Activated CD4-positive, alpha-beta memory T cell treated with anti-CD3 and anti-CD28 coated beads, Interleukin-2, amount 10 ng/mL, durations not matched to agents 7 days and 5 days (primary cell): ENCODE measurements at regions of chr1 and their contacts with region 1.

Region 1: DNA sequence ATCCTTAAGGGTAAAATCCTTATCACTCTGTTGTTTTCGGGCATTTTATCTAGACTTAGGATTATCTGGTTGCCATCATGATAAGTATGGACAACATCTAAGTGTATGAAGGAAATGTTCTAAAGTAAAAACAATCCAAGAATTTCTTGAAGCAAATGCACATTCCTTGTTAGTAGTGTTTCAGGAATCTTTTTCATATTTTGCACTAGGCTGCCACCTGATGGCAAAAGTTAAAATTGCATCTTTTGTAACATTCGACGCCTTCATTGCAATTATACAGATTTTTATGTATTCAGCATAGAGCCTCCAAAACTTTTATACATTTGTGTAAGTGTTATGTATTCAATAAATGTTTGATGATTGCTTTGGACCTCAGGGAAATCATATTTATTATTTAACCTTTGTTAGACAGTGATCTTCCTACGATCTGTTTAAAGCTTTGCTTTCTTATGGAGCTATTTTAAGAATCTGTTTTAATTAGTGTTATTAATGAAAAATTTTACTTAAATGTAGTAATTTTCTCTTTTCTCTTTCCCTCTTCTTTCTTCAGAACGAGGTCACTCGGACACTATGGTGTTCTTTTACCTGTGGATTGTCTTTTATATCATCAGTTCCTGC is 49.4 kb upstream of the KIAA1614 start:
- DNase-seq: no peak
- H3K4me3 Mint-ChIP-seq: no peak overlapping the region
- H3K27ac Mint-ChIP-seq: no peak overlapping the region
- H3K4me1 Mint-ChIP-seq: no peaks in the 10 kb centered on the region
- H3K27me3 Mint-ChIP-seq: no peaks in the 10 kb centered on the region

Region 2: DNA sequence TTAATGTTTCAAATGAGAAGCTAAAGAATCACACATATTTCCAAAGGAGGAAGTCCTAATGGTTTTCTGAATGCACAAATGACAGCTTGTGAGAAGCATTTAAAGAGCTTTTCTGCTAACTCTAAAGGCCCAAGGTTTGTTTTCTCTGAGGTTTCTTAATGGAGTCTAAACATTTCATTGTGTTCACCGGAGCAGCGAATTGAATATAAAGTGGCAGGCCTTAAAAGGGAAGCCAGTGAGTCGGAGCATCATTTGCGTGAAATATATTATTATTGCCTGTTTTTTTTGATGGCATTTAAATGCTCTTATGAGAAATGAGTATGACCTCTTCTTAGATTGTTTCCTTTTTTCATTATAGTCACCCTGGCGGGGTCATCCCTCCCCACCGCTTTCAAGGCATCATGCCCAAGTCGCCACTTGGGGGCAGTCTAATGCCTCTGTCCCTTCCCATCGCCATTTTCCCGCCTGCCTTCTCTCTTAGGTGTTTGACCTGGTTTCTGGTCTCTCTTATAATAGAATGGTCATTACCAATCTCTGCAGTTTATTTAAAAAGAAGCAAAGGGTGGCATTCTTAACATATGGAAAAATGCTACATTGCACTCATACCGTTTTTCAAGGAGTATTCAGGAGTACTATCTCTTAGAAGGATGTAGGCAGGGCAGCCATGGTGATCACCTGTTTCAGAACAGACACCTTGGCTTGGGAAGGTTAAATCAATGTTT is 329.8 kb before region 1 on chr1:
- CTCF ChIA-PET with region 1: interaction called, 113 read pairs
- POLR2A ChIA-PET with region 1: no interaction called
- DNase-seq: peak; percentile 72
- H3K4me3 Mint-ChIP-seq: no peak overlapping the region
- H3K27ac Mint-ChIP-seq: no peak overlapping the region
- H3K4me1 Mint-ChIP-seq: no peaks in the 10 kb centered on the region
- H3K27me3 Mint-ChIP-seq: peaks cover 17% of the 10 kb centered on the region

Region 3: DNA sequence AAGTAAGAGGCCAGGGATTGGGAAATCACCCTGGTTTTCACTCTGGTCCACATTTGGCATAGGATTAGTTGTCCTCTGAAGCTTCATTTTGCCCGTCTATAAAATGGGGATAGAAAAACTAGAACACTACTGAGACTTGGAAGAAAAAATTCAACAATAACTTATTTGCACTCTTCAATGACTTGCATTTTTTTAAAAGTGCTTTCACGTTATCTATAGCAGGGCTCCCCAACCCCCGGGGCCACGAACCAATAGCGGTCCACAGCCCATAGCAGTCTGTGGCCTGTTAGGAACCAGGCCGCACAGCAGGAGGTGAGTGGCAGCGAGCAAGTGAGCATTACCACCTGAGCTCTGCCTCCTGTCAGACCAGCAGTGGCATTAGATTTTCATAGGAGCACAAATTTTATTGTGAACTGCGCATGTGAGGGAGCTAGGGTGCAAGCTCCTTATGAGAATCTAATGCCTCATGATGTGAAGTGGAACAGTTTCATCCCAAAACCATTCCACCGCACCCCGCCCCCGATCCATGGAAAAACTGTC is 52.2 kb after region 1 on chr1:
- CTCF ChIA-PET with region 1: no interaction called
- POLR2A ChIA-PET with region 1: no interaction called
- DNase-seq: no peak
- H3K4me3 Mint-ChIP-seq: no peak overlapping the region
- H3K27ac Mint-ChIP-seq: no peak overlapping the region
- H3K4me1 Mint-ChIP-seq: peaks cover 12% of the 10 kb centered on the region
- H3K27me3 Mint-ChIP-seq: peaks cover 33% of the 10 kb centered on the region